H1 (cell line): ENCODE measurements at regions of chr19 and their contacts with region 1.

Region 1: GRCh38 chr19:33416307-33417215 is 43.1 kb downstream of the CEBPG start:
- DNase-seq: peak; percentile 29 to 91
- H3K4me3 ChIP-seq: peak overlapping the region in 3 of 4 experiments; percentile 8 to 40 (median 34); a peak in 2 of 8 replicates
- H3K27ac ChIP-seq: no peak overlapping the region
- H3K4me1 ChIP-seq: peaks cover 0 to 12% (median 4%) of the 10 kb centered on the region in 4 experiments; a peak in 4 of 7 replicates
- H3K27me3 ChIP-seq: no peaks in the 10 kb centered on the region; a peak in 1 of 7 replicates
- CTCF ChIP-seq: peak; percentile 77 to 85 (median 81)
- EP300 ChIP-seq: no peak
- POLR2A ChIP-seq: no peak
- RAD21 ChIP-seq: peak; percentile 73 to 78

Region 2: DNA sequence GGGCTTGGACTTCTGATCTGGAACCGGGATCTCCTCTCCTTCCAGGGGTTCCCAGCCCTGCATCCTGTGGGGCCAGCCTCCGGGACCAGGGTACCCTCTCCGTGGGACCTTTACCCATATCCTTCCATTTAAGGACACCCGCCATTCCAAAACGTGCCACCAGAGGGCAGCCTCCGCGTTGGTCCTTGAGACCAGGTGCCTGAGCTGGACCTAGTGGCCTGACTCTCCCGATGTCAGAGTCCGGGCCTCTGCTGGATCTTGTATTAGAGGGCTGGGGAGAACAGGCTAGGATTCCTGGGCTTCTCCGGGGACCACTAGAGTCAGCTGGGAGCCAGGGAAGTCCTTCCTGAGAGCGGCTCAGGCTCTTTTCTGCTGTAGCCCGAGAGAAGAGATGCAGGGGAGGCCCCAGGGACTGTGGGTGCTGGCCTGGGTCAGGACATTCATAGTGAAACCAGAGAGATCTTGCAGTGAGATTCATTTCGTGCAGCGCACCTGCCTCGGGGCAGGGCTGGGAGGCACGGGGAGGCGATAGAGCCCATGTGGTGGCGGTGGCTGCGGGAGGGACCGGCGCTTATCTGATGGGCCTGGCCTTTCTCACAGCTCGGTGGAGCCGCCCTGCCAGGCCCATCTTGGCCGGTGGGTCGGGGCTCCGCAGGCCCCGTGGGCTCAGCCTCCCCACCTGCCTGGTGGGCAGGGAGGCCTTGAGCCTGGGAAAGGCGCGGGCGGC is 181.1 kb before region 1 on chr19:
- CTCF ChIA-PET with region 1: interaction called, 426 read pairs
- POLR2A ChIA-PET with region 1: no interaction called
- DNase-seq: peak; percentile 70 to 99
- H3K4me3 ChIP-seq: no peak overlapping the region
- H3K27ac ChIP-seq: no peak overlapping the region
- H3K4me1 ChIP-seq: no peaks in the 10 kb centered on the region; a peak in 1 of 7 replicates
- H3K27me3 ChIP-seq: no peaks in the 10 kb centered on the region
- CTCF ChIP-seq: peak; percentile 90 to 91 (median 91)
- EP300 ChIP-seq: no peak
- POLR2A ChIP-seq: no peak
- RAD21 ChIP-seq: peak; percentile 87 to 94

Region 3: GRCh38 chr19:33350538-33351309 is 65.8 kb before region 1 on chr19:
- CTCF ChIA-PET with region 1: no interaction called
- POLR2A ChIA-PET with region 1: no interaction called
- DNase-seq: no peak
- H3K4me3 ChIP-seq: no peak overlapping the region
- H3K27ac ChIP-seq: no peak overlapping the region
- H3K4me1 ChIP-seq: no peaks in the 10 kb centered on the region
- H3K27me3 ChIP-seq: no peaks in the 10 kb centered on the region
- CTCF ChIP-seq: no peak
- EP300 ChIP-seq: no peak
- POLR2A ChIP-seq: no peak
- RAD21 ChIP-seq: no peak

Region 4: GRCh38 chr19:33394006-33394849 is 22.3 kb before region 1 on chr19:
- CTCF ChIA-PET with region 1: interaction called, 16 read pairs
- POLR2A ChIA-PET with region 1: no interaction called
- DNase-seq: no peak
- H3K4me3 ChIP-seq: no peak overlapping the region
- H3K27ac ChIP-seq: no peak overlapping the region
- H3K4me1 ChIP-seq: peaks cover 0 to 14% (median 8%) of the 10 kb centered on the region in 4 experiments; a peak in 4 of 7 replicates
- H3K27me3 ChIP-seq: no peaks in the 10 kb centered on the region
- CTCF ChIP-seq: no peak
- EP300 ChIP-seq: no peak
- POLR2A ChIP-seq: no peak
- RAD21 ChIP-seq: no peak

Region 5: DNA sequence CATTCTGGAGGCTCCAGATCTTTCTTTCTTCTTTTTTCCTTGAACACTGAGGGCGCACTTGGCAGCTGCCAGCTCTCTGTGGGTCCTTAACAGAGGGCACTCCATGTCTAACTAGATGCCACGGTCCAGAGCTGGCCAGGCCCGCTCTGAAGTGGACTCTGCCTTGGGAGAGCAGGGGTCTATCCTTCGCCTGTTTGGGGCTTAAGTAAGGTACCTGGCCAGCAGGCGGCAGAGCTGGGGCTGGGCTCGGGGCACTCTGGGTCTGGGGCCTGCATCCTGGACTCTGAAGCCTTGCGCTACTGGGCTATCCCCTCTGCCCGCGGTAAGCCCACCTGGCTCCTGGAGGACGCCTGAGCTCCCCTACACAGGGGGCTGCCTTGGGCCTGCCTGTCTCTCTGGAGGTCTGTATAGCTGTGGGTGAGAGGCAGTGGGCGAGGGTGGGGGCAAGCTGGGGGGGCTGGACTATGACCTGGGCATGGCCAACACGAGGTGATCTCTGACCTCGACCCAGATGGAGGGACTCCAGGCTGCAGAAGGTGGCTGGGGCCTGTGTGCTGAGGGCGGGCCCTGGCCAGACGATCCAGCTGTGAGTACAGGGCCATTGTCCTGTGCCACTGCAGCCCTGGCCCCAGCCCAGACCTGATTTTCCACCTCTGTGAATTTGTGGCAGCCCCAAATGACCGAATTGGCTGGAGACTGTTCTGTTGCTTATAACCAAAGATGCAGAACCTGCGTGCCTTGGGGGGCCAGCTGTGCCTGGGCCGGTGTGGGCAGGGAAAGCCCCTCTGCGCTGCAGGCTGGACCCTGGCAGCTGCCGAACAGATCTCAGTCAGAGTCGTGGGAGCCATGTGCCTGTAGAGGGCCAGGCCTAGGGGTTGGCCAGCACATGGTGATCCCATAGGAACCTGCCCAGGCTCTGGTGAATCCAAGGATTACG is 16.5 kb before region 1 on chr19:
- CTCF ChIA-PET with region 1: interaction called, 16 read pairs
- POLR2A ChIA-PET with region 1: no interaction called
- DNase-seq: no peak
- H3K4me3 ChIP-seq: no peak overlapping the region
- H3K27ac ChIP-seq: no peak overlapping the region
- H3K4me1 ChIP-seq: peaks cover 0 to 11% (median 7%) of the 10 kb centered on the region in 4 experiments; a peak in 4 of 7 replicates
- H3K27me3 ChIP-seq: no peaks in the 10 kb centered on the region
- CTCF ChIP-seq: peak in 2 of 3 experiments; percentile 13 to 14; a peak in 2 of 4 replicates
- EP300 ChIP-seq: no peak
- POLR2A ChIP-seq: no peak
- RAD21 ChIP-seq: peak in 1 of 2 experiments; percentile 25; a peak in 1 of 4 replicates

Region 6: GRCh38 chr19:33430674-33431277 is 14.2 kb after region 1 on chr19:
- CTCF ChIA-PET with region 1: interaction called, 69 read pairs
- POLR2A ChIA-PET with region 1: no interaction called
- DNase-seq: peak; percentile 39 to 88
- H3K4me3 ChIP-seq: no peak overlapping the region
- H3K27ac ChIP-seq: no peak overlapping the region
- H3K4me1 ChIP-seq: peaks cover 0 to 3% (median 2%) of the 10 kb centered on the region in 4 experiments; a peak in 2 of 7 replicates
- H3K27me3 ChIP-seq: no peaks in the 10 kb centered on the region
- CTCF ChIP-seq: peak; percentile 87 to 99 (median 90)
- EP300 ChIP-seq: no peak
- POLR2A ChIP-seq: no peak
- RAD21 ChIP-seq: peak; percentile 89 to 90

Region 7: DNA sequence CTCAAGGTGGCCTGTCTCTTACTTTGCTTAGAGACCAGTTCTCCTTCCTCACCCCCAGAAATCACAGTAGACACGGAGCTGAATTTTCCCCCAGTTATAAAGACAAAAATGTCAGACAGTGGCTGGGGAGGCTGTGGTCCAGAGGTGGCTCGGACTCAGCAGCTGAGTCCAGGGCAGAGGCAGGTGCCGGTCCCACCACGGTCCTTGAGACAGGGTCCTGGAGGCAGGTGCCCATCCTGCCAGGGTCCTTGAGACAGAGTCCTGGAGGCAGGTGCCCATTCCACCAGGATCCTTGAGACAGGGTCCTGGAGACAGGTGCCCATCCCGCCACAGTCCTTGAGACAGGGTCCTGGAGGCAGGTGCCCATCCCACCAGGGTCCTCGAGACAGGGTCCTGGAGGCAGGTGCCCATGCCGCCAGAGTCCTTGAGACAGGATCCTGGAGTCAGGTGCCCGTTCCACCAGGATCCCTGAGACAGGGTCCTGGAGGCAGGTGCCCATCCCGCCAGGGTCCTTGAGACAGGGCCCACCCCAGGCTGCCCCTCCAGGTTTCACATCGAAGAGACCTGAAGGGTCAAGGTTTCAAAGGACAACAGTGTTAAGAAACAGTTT is 81.9 kb after region 1 on chr19:
- CTCF ChIA-PET with region 1: no interaction called
- POLR2A ChIA-PET with region 1: no interaction called
- DNase-seq: no peak
- H3K4me3 ChIP-seq: no peak overlapping the region
- H3K27ac ChIP-seq: no peak overlapping the region
- H3K4me1 ChIP-seq: no peaks in the 10 kb centered on the region; a peak in 1 of 7 replicates
- H3K27me3 ChIP-seq: no peaks in the 10 kb centered on the region
- CTCF ChIP-seq: no peak
- EP300 ChIP-seq: no peak
- POLR2A ChIP-seq: no peak
- RAD21 ChIP-seq: no peak

Region 8: GRCh38 chr19:33771384-33772101 is 355.0 kb after region 1 on chr19:
- CTCF ChIA-PET with region 1: interaction called, 79 read pairs
- POLR2A ChIA-PET with region 1: no interaction called
- DNase-seq: peak; percentile 29 to 89
- H3K4me3 ChIP-seq: no peak overlapping the region
- H3K27ac ChIP-seq: no peak overlapping the region
- H3K4me1 ChIP-seq: no peaks in the 10 kb centered on the region
- H3K27me3 ChIP-seq: no peaks in the 10 kb centered on the region
- CTCF ChIP-seq: peak; percentile 88 to 95 (median 89)
- EP300 ChIP-seq: no peak
- POLR2A ChIP-seq: no peak
- RAD21 ChIP-seq: peak; percentile 98 to 99